Caco-2 (cell line): ENCODE measurements at regions of chr11 and their contacts with region 1.

Region 1: GRCh38 chr11:85595285-85595884 is 31.8 kb downstream of the DLG2 start:
- DNase-seq: peak in 1 of 2 experiments; percentile 62
- H3K4me3 ChIP-seq: no peak overlapping the region
- H3K4me3 Mint-ChIP-seq: no peak overlapping the region
- H3K27ac Mint-ChIP-seq: no peak overlapping the region
- H3K4me1 ChIP-seq: no peaks in the 10 kb centered on the region
- H3K4me1 Mint-ChIP-seq: peaks cover 6% of the 10 kb centered on the region
- H3K27me3 ChIP-seq: peaks cover 2% of the 10 kb centered on the region; the same call in 1 of the 2 replicates
- H3K27me3 Mint-ChIP-seq: peaks cover 4% of the 10 kb centered on the region
- CTCF ChIP-seq: peak; percentile 69 to 83

Region 2: DNA sequence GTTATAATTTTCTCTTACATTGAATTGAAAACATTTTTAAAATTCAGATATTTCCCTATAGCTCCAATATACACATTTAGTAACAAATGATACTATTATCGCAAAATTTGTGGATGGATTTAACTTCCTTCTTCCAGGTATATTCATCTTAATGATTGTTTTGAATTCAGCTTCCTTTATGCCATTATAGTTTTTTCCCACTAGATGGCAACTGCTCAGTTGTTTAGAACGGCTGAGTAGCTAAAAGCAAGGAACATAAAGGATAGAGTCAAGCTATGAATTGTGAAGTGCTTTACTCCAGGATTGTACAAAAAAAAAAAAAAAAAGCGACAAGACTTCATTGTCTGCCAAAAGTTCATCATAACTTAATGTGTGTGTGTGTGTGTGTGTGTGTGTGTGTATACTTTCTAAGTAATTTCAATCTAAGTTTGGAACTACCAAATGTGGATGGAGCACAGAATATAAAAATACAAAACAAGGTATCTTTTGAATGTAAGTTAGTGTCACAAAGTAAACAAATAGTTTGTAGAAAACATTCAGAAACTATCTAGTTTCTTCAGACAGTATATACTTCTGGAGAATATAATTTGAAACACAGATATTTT is 814.6 kb before region 1 on chr11:
- CTCF ChIA-PET with region 1: no interaction called
- POLR2A ChIA-PET with region 1: no interaction called
- intact Hi-C with region 1: loop called (anchors 1 kb)
- DNase-seq: peak in 1 of 2 experiments; percentile 21
- H3K4me3 ChIP-seq: no peak overlapping the region
- H3K4me3 Mint-ChIP-seq: no peak overlapping the region
- H3K27ac Mint-ChIP-seq: no peak overlapping the region
- H3K4me1 ChIP-seq: no peaks in the 10 kb centered on the region
- H3K4me1 Mint-ChIP-seq: no peaks in the 10 kb centered on the region
- H3K27me3 ChIP-seq: no peaks in the 10 kb centered on the region
- H3K27me3 Mint-ChIP-seq: peaks cover 12% of the 10 kb centered on the region
- CTCF ChIP-seq: peak; percentile 48 to 78

Region 3: DNA sequence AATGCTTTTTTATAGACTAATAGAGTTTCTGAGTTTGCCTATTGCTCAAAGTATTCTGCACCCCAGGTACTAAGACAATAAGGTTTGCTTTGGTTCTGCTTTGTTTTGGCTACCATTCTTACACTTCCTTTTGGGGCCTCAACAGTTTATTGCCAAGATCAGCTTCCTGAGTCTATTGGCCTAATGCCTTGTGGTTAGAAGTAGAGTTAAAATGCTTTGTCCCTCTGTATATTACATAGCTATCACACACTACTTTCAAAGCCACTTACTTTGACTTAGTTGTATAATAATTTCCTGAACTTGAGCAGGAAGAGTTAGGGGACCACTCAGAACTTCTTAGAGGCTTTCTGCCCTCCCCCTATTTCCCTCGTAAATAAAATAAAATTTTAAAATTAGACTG is 64.8 kb before region 1 on chr11:
- CTCF ChIA-PET with region 1: no interaction called
- POLR2A ChIA-PET with region 1: no interaction called
- intact Hi-C with region 1: no loop called
- DNase-seq: no peak
- H3K4me3 ChIP-seq: no peak overlapping the region
- H3K4me3 Mint-ChIP-seq: no peak overlapping the region
- H3K27ac Mint-ChIP-seq: no peak overlapping the region
- H3K4me1 ChIP-seq: no peaks in the 10 kb centered on the region
- H3K4me1 Mint-ChIP-seq: no peaks in the 10 kb centered on the region
- H3K27me3 ChIP-seq: no peaks in the 10 kb centered on the region
- H3K27me3 Mint-ChIP-seq: peaks cover 9% of the 10 kb centered on the region
- CTCF ChIP-seq: no peak

Region 4: DNA sequence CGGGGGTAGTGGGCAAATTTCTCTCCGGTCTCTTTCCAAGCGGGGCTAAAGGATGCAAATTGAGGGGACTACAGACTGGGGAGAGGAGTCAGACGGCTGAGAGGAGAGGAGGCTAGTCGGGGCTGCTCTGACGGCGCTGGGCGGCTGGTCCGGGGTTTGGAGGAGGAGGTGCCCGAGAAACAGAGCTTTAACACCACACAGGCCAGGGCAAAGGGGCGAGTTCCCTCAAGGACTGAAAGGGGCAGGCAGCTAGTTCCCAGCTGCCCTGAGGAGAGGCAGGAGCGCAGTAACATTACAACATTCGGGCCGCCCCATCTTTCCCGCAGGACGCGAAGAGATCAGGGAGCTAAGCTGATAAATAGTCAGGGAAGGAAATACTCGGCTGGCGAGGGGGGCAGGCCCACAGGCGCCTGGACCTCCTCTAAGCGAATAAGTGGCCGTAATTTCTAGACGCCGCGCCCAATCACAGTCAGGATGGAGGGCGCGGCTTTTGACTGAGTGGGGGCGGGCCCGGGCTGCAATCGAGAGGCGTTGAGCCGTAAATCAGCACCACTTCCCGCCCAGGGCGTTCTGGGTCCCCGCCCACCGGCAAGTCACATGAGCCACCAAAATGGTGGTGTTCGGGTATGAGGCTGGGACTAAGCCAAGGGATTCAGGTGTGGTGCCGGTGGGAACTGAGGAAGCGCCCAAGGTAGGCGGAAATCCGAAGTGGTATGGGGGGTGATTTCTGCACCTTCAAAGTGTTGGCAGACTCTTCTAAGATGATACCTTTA is 32.8 kb after region 1 on chr11 and contains the start of gene TMEM126B:
- CTCF ChIA-PET with region 1: interaction called, 3 read pairs
- POLR2A ChIA-PET with region 1: no interaction called
- intact Hi-C with region 1: loop called (anchors 1 kb)
- DNase-seq: peak; percentile 99 to 100
- H3K4me3 ChIP-seq: peak within 1 kb of the TSS; percentile 58
- H3K4me3 Mint-ChIP-seq: peak within 1 kb of the TSS; percentile 98
- H3K27ac Mint-ChIP-seq: peak within 1 kb of the TSS; percentile 96
- H3K4me1 ChIP-seq: peaks cover 8% of the 10 kb centered on the region; the same call in 1 of the 2 replicates
- H3K4me1 Mint-ChIP-seq: peaks cover 13% of the 10 kb centered on the region
- H3K27me3 ChIP-seq: no peaks in the 10 kb centered on the region
- H3K27me3 Mint-ChIP-seq: no peaks in the 10 kb centered on the region
- CTCF ChIP-seq: no peak
- total RNA-seq, gene TMEM126B: 141 and 144 TPM in 2 replicates

Region 5: GRCh38 chr11:85694386-85694980 is 99.1 kb after region 1 on chr11:
- CTCF ChIA-PET with region 1: no interaction called
- POLR2A ChIA-PET with region 1: no interaction called
- intact Hi-C with region 1: loop called (anchors 1 kb)
- DNase-seq: peak in 1 of 2 experiments; percentile 59
- H3K4me3 ChIP-seq: no peak overlapping the region
- H3K4me3 Mint-ChIP-seq: no peak overlapping the region
- H3K27ac Mint-ChIP-seq: no peak overlapping the region
- H3K4me1 ChIP-seq: no peaks in the 10 kb centered on the region
- H3K4me1 Mint-ChIP-seq: no peaks in the 10 kb centered on the region
- H3K27me3 ChIP-seq: no peaks in the 10 kb centered on the region
- H3K27me3 Mint-ChIP-seq: no peaks in the 10 kb centered on the region
- CTCF ChIP-seq: peak; percentile 79 to 85

Region 6: DNA sequence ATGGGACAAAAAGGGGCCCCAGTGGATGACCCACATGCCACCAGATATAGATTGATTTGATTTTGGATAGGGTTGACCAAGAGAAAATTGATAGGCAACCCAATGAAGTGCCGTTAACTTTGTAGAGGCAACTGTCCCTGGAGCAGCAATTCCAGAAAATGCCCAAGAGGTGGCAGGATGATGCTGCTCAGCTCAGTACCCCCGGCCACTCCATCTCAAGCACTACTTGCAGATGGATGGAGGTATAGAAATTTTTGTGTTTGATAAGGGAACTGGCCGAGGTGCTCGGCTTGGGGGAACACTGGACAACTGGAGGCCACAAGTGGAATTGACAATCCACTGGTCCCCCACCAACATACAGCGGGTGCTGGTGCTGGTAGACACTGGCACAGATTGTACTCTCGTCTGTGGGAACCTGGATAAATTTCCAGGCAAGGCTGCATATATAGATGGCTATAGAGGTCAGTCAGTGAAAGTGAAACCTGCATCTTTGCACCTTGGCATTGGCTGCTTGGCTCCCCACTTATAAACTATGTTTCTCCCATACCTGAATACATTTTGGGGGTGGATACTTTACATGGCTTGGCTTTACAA is 346.1 kb after region 1 on chr11:
- CTCF ChIA-PET with region 1: no interaction called
- POLR2A ChIA-PET with region 1: no interaction called
- intact Hi-C with region 1: loop called (anchors 10 kb)
- DNase-seq: peak; percentile 75 to 78
- H3K4me3 ChIP-seq: no peak overlapping the region
- H3K4me3 Mint-ChIP-seq: no peak overlapping the region
- H3K27ac Mint-ChIP-seq: no peak overlapping the region
- H3K4me1 ChIP-seq: no peaks in the 10 kb centered on the region
- H3K4me1 Mint-ChIP-seq: peaks cover 6% of the 10 kb centered on the region
- H3K27me3 ChIP-seq: no peaks in the 10 kb centered on the region
- H3K27me3 Mint-ChIP-seq: no peaks in the 10 kb centered on the region
- CTCF ChIP-seq: peak; percentile 80 to 81

Region 7: DNA sequence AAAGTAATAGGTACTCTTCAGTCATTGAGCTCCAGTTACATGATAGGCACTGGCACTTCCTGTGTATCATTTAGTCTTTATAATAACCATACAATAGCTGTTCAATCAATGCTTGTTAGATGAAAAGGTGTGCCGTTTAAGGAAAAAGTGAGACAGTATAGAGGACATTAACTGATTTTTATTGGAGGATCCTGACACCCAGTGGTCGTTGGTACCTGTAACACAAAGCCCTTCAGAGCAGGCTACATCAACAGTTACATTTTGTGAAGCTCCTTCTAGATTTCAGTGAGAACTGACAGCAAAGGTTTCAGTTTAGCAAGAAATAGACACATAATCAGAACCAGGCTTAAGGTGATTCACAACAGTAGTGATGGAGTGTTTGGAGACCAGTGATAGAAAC is 823.5 kb after region 1 on chr11:
- CTCF ChIA-PET with region 1: no interaction called
- POLR2A ChIA-PET with region 1: no interaction called
- intact Hi-C with region 1: loop called (anchors 5 kb)
- DNase-seq: peak in 1 of 2 experiments; percentile 46
- H3K4me3 ChIP-seq: no peak overlapping the region
- H3K4me3 Mint-ChIP-seq: no peak overlapping the region
- H3K27ac Mint-ChIP-seq: no peak overlapping the region
- H3K4me1 ChIP-seq: peaks cover 19% of the 10 kb centered on the region
- H3K4me1 Mint-ChIP-seq: peaks cover 33% of the 10 kb centered on the region
- H3K27me3 ChIP-seq: no peaks in the 10 kb centered on the region
- H3K27me3 Mint-ChIP-seq: no peaks in the 10 kb centered on the region
- CTCF ChIP-seq: peak; percentile 31 to 61